Dendritic cell treated with granulocyte-macrophage colony-stimulating factor and Interleukin-4, amounts not matched to agents 40 ng/mL and 50 ng/mL, for 4 days (primary cell): ENCODE measurements at regions of chr18 and their contacts with region 1.

Region 1: GRCh38 chr18:623761-624620 is 27.2 kb downstream of the CLUL1 start:
- H3K4me3 Mint-ChIP-seq: no peak overlapping the region
- H3K27ac Mint-ChIP-seq: no peak overlapping the region
- H3K4me1 Mint-ChIP-seq: no peaks in the 10 kb centered on the region
- H3K27me3 Mint-ChIP-seq: peaks cover 35% of the 10 kb centered on the region

Region 2: GRCh38 chr18:712401-713134 is 88.6 kb after region 1 on chr18 and contains the start of gene ENOSF1:
- intact Hi-C with region 1: loop called (anchors 5 kb)
- H3K4me3 Mint-ChIP-seq: peak within 1 kb of the TSS; percentile 80
- H3K27ac Mint-ChIP-seq: peak within 1 kb of the TSS; percentile 80
- H3K4me1 Mint-ChIP-seq: peaks cover 18% of the 10 kb centered on the region
- H3K27me3 Mint-ChIP-seq: peaks cover 28% of the 10 kb centered on the region

Region 3: GRCh38 chr18:830315-830901 is 206.4 kb after region 1 on chr18:
- intact Hi-C with region 1: loop called (anchors 1 kb)
- H3K4me3 Mint-ChIP-seq: no peak overlapping the region
- H3K27ac Mint-ChIP-seq: no peak overlapping the region
- H3K4me1 Mint-ChIP-seq: peaks cover 15% of the 10 kb centered on the region
- H3K27me3 Mint-ChIP-seq: peaks cover 71% of the 10 kb centered on the region

Region 4: DNA sequence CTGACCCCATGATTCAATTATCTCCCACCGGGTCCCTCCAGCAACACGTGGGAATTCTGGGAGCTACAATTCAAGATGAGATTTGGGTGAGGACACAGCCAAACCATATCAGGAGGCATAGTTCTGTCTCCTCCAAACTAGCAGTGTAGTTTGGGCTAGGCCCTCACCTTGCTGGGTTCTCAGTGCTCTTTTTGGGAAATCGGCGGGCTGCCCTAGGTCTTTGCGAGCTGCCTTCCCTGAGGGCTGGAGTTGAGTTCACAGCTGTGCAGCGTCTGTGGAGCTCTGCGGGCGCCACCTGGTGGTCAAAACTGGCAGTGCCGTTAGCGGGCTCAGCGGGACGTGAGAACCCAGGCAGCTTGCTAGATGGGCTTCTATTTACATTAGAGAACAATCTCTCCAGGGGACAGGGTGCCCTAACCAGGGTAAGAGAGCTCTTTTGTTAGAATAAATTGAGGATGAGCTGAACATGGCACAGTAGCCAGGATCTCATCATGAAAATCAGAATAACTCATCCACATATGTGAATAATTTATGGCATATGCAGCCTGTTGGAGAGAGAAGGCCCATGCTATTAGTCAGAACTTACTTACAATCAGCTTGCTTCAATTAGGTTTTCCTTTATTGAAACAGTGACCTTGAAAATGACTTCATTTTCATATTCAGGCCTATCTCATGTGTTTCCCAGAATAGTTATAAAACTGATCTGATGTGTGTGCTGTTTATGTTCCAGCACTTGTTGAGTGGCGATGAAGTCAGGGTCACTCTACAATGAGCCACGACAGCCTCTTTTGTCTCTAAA is 215.4 kb after region 1 on chr18:
- intact Hi-C with region 1: loop called (anchors 2 kb)
- H3K4me3 Mint-ChIP-seq: no peak overlapping the region
- H3K27ac Mint-ChIP-seq: no peak overlapping the region
- H3K4me1 Mint-ChIP-seq: no peaks in the 10 kb centered on the region
- H3K27me3 Mint-ChIP-seq: peaks cover 64% of the 10 kb centered on the region

Region 5: GRCh38 chr18:1037776-1038175 is 413.8 kb after region 1 on chr18:
- intact Hi-C with region 1: no loop called
- H3K4me3 Mint-ChIP-seq: no peak overlapping the region
- H3K27ac Mint-ChIP-seq: no peak overlapping the region
- H3K4me1 Mint-ChIP-seq: no peaks in the 10 kb centered on the region
- H3K27me3 Mint-ChIP-seq: no peaks in the 10 kb centered on the region